ENCODE measurements at regions of chr15 and their contacts with region 1.

Region 1: GRCh38 chr15:81819924-81820635 is 225.7 kb downstream of the MEX3B start:
- DNase-seq: no peak
- ATAC-seq: no peak
- H3K4me3 ChIP-seq: no peak overlapping the region
- H3K27ac ChIP-seq: no peak overlapping the region
- H3K4me1 ChIP-seq: no peaks in the 10 kb centered on the region
- H3K27me3 ChIP-seq: peaks cover 0 to 17% (median 0%) of the 10 kb centered on the region in 7 donors
- CTCF ChIP-seq: no peak

Region 2: DNA sequence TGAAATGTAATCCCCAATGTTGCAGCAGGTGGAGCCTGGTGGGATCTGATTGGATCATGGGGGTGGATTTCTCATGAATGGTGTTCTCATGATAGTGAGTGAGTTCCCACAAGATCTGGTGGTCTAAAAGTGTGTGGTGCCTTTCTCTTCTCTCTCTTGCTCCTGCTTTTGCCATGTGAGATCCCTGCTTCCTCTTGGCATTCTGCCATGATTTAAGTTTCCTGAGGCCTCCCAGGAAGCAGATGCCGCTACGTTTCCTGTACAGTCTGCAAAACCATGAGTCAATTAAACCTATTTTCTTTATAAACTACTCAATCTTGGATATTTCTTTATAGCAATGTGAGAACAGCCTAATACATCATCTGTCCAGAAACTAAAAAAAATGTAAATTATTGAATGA is 72.6 kb before region 1 on chr15:
- intact Hi-C with region 1: loop called in 1 of 10 experiments (anchors 2 kb)
- DNase-seq: no peak
- ATAC-seq: no peak
- H3K4me3 ChIP-seq: no peak overlapping the region
- H3K27ac ChIP-seq: no peak overlapping the region
- H3K4me1 ChIP-seq: peaks cover 0 to 27% (median 16%) of the 10 kb centered on the region in 9 donors
- H3K27me3 ChIP-seq: peaks cover 0 to 3% (median 0%) of the 10 kb centered on the region in 7 donors
- CTCF ChIP-seq: no peak

Measured in heart right ventricle (tissue), 16 donors.